Activated T-helper 1 cell treated with anti-CD3 and anti-CD28 coated beads, Interleukin-12 subunit alpha, Interleukin-12 subunit beta, Interleukin-2, Interleukin-4 antibody, amounts not matched to agents 30 ng/mL and 10 ng/mL and 1 ng/mL, durations not matched to agents 14 hours and 24 hours and 36 hours (primary cell): ENCODE measurements at regions of chr2 and their contacts with region 1.

Region 1: GRCh38 chr2:119476301-119477021 is 44.8 kb downstream of the TMEM37 start:
- DNase-seq: peak; percentile 9
- H3K4me3 Mint-ChIP-seq: no peak overlapping the region
- H3K27ac Mint-ChIP-seq: no peak overlapping the region
- H3K4me1 Mint-ChIP-seq: no peaks in the 10 kb centered on the region
- H3K27me3 Mint-ChIP-seq: no peaks in the 10 kb centered on the region

Region 2: DNA sequence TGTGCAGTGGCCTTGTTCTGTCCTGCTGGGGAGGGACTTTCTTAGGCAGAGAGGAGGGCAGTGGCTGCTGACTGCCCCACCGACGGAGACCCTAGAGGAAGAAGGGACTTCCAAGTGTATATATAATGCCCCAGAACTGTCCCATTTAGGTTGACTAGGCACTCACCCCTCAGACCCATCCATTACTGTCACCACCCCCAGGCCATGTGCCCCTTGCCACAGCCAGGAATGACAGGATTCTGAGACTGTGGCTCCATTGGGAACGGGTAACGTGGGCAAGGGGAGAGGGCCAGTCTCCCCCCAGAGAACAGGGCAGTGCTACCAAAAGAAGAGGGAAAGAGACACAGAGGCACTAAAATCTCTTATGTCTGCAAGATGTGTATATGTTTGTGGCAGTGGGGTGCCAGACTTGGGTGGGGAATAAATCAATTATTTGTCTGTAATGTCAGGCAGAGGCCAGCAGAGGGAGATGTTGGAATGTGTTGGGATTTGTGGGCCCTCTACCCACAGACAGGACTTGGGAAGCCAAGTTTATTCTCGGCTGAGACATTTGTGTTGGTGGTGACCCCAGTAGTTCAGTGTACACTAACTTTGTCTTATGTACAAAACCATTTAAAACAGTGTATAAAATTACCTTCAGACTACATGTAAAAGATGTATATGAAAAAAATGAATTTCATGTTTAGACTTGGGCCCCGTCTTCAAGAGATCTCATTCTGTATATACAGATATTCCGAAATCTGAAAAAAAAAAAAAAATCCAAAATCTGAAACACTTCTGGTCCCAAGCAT is 68.8 kb before region 1 on chr2:
- intact Hi-C with region 1: loop called (anchors 1 kb)
- DNase-seq: no peak
- H3K4me3 Mint-ChIP-seq: no peak overlapping the region
- H3K27ac Mint-ChIP-seq: no peak overlapping the region
- H3K4me1 Mint-ChIP-seq: no peaks in the 10 kb centered on the region
- H3K27me3 Mint-ChIP-seq: peaks cover 7% of the 10 kb centered on the region

Region 3: GRCh38 chr2:119419803-119420508 is 56.5 kb before region 1 on chr2:
- intact Hi-C with region 1: no loop called
- DNase-seq: no peak
- H3K4me3 Mint-ChIP-seq: no peak overlapping the region
- H3K27ac Mint-ChIP-seq: no peak overlapping the region
- H3K4me1 Mint-ChIP-seq: no peaks in the 10 kb centered on the region
- H3K27me3 Mint-ChIP-seq: peaks cover 14% of the 10 kb centered on the region

Region 4: GRCh38 chr2:119730671-119731193 is 254.3 kb after region 1 on chr2:
- intact Hi-C with region 1: no loop called
- DNase-seq: no peak
- H3K4me3 Mint-ChIP-seq: no peak overlapping the region
- H3K27ac Mint-ChIP-seq: no peak overlapping the region
- H3K4me1 Mint-ChIP-seq: no peaks in the 10 kb centered on the region
- H3K27me3 Mint-ChIP-seq: peaks cover 6% of the 10 kb centered on the region